Activated CD8-positive, alpha-beta memory T cell treated with anti-CD3 and anti-CD28 coated beads, Interleukin-2, amount 10 ng/mL, durations not matched to agents 7 days and 5 days (primary cell): ENCODE measurements at regions of chr1 and their contacts with region 1.

Region 1: DNA sequence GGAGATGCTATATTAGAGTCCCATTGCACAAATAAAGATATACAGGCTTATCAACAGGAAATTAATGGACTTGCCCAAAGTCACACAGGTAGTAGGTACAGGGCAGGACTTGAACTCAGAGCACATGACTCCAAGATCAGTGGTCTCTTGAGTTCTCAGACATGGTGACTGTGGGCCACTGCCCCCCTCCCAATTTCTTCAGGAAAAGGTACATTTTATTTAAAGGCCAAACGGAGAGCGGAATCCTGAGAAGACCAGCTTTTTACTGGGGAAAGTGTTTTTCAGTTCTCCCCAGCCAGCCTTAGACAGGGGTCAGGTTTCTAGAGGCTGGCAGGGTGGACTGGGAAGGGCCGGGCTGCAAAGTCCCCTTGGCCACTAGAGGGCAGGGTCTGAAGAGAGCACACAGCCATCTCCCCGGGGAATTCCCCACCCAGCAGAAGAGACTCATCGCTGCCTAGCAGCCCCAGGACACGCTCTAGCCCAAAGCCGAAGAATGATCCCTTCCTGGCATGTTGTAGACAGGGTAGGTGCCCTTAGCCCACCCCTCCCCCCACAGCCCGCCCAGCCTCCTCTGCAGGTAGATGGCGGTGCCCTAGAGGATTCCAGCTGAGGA is 29.7 kb downstream of the ACP6 start:
- DNase-seq: peak; percentile 85
- ATAC-seq: peak; percentile 100
- H3K4me3 Mint-ChIP-seq: no peak overlapping the region
- H3K27ac Mint-ChIP-seq: no peak overlapping the region
- H3K4me1 Mint-ChIP-seq: peaks cover 33% of the 10 kb centered on the region
- H3K27me3 Mint-ChIP-seq: no peaks in the 10 kb centered on the region

Region 2: DNA sequence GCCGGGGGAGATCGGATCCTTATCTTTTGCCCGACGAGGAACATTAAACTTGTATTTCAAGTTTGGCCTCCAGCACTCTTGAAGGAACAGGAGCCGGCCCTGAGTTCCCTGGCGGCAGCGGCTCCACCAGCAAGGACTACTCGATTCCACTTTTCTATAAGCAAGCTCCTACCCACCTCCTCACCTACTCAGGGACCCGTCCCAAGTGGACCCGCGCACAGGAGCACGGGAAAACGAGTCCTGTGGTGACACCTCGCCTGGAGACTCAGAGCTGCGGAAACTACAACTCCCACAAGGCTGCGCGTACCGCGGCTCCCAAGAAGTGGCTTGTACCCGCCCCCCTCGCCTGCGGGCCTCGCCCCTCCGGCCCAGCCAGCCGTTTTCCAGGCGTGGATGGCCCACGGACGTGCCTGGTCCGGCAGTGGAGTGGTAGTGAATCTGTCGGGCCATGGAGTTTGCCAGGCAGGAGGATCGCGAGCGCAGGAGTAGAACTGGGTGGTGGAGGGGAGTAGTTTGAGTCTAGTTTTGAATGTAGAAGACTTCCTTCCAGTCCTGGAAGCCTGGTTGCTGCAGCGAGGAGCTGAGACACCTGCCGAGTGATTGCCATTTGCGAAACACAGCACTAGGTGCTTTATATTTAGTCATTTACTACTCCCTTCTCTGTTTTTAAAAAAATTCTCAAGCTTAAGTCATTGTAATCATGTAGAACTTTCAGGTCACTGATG is 29.8 kb after region 1 on chr1 and contains the start of gene ACP6:
- CTCF ChIA-PET with region 1: interaction called, 11 read pairs
- DNase-seq: peak; percentile 95
- ATAC-seq: peak; percentile 96
- H3K4me3 Mint-ChIP-seq: peak within 1 kb of the TSS; percentile 90
- H3K27ac Mint-ChIP-seq: peak within 1 kb of the TSS; percentile 85
- H3K4me1 Mint-ChIP-seq: peaks cover 28% of the 10 kb centered on the region
- H3K27me3 Mint-ChIP-seq: peaks cover 23% of the 10 kb centered on the region
- total RNA-seq, gene ACP6: 11.2 to 20.3 TPM